ENCODE measurements at regions of chr2 and their contacts with region 1.

Region 1: GRCh38 chr2:132977812-132978529 is 308.0 kb upstream of the LYPD1 start:
- DNase-seq: no peak
- ATAC-seq: peak; percentile 4; the same call in 2 of the 3 replicates
- H3K4me3 ChIP-seq: no peak overlapping the region
- H3K27ac ChIP-seq: no peak overlapping the region
- H3K4me1 ChIP-seq: no peaks in the 10 kb centered on the region
- H3K27me3 ChIP-seq: no peaks in the 10 kb centered on the region
- CTCF ChIP-seq: no peak
- EP300 ChIP-seq: no peak
- POLR2A ChIP-seq: no peak
- RAD21 ChIP-seq: no peak

Region 2: DNA sequence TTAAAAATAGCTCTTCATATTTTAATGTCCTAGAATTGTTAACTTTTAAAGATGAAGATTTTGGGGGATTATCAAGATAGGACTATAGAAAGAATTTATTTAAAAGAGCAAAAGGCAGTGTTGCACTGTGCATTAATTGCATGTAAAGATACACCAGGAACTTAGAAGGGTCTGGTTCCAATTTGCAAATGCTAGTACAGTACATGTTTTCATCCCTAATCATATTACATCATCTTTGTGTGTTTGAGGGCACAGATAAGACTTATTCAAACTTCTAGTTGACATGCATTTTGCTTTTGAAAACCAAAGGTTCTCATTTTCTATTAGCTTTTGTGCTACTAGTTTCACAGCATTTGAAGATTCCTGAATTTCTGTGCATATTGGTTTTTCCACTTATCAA is 76.3 kb before region 1 on chr2:
- CTCF ChIA-PET with region 1: no interaction called
- POLR2A ChIA-PET with region 1: no interaction called
- RAD21 ChIA-PET with region 1: interaction called, 4 read pairs
- SMC1A ChIA-PET with region 1: no interaction called
- in situ Hi-C with region 1: no loop called
- intact Hi-C with region 1: loop called (anchors 2 kb)
- DNase-seq: no peak
- ATAC-seq: 0 out of 3 replicates have a peak, but pooled peaks have one; percentile 17
- H3K4me3 ChIP-seq: no peak overlapping the region
- H3K27ac ChIP-seq: no peak overlapping the region
- H3K4me1 ChIP-seq: no peaks in the 10 kb centered on the region
- H3K27me3 ChIP-seq: no peaks in the 10 kb centered on the region; a peak in 1 of 4 replicates
- CTCF ChIP-seq: no peak
- EP300 ChIP-seq: no peak
- POLR2A ChIP-seq: no peak
- RAD21 ChIP-seq: no peak

Region 3: GRCh38 chr2:132936791-132937190 is 41.2 kb before region 1 on chr2:
- CTCF ChIA-PET with region 1: interaction called, 4 read pairs
- POLR2A ChIA-PET with region 1: interaction called, 10 read pairs
- RAD21 ChIA-PET with region 1: interaction called, 36 read pairs
- SMC1A ChIA-PET with region 1: interaction called, 113 read pairs
- in situ Hi-C with region 1: no loop called
- intact Hi-C with region 1: no loop called
- DNase-seq: peak; percentile 40
- ATAC-seq: peak; percentile 99
- H3K4me3 ChIP-seq: no peak overlapping the region
- H3K27ac ChIP-seq: no peak overlapping the region
- H3K4me1 ChIP-seq: no peaks in the 10 kb centered on the region
- H3K27me3 ChIP-seq: no peaks in the 10 kb centered on the region
- CTCF ChIP-seq: no peak
- EP300 ChIP-seq: peak in 1 of 2 experiments; percentile 73; a peak in 1 of 4 replicates
- POLR2A ChIP-seq: no peak
- RAD21 ChIP-seq: no peak

Region 4: DNA sequence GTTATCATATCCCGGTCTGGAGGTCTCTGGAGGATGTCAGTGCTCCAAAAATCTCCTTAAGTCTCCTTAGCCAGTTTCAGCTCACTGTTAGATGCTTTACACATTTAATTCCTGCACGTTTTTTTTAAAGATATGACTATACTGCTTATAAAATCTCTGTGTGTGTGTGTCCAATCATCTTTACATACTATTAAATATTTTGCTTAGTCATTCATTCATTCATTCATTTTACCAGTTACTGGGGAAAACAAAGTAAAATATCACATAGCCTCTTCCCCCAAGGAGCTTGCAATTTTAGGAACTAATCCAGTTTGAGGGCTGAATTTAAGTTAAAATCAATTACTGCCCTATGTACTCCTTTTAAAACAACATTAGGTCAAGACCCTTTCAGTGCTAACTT is 14.8 kb before region 1 on chr2:
- CTCF ChIA-PET with region 1: interaction called, 9 read pairs
- POLR2A ChIA-PET with region 1: no interaction called
- RAD21 ChIA-PET with region 1: interaction called, 12 read pairs
- SMC1A ChIA-PET with region 1: interaction called, 31 read pairs
- in situ Hi-C with region 1: no loop called
- intact Hi-C with region 1: no loop called
- DNase-seq: no peak
- ATAC-seq: no peak
- H3K4me3 ChIP-seq: no peak overlapping the region
- H3K27ac ChIP-seq: no peak overlapping the region
- H3K4me1 ChIP-seq: no peaks in the 10 kb centered on the region
- H3K27me3 ChIP-seq: no peaks in the 10 kb centered on the region
- CTCF ChIP-seq: no peak
- EP300 ChIP-seq: no peak
- POLR2A ChIP-seq: no peak
- RAD21 ChIP-seq: no peak

Region 5: DNA sequence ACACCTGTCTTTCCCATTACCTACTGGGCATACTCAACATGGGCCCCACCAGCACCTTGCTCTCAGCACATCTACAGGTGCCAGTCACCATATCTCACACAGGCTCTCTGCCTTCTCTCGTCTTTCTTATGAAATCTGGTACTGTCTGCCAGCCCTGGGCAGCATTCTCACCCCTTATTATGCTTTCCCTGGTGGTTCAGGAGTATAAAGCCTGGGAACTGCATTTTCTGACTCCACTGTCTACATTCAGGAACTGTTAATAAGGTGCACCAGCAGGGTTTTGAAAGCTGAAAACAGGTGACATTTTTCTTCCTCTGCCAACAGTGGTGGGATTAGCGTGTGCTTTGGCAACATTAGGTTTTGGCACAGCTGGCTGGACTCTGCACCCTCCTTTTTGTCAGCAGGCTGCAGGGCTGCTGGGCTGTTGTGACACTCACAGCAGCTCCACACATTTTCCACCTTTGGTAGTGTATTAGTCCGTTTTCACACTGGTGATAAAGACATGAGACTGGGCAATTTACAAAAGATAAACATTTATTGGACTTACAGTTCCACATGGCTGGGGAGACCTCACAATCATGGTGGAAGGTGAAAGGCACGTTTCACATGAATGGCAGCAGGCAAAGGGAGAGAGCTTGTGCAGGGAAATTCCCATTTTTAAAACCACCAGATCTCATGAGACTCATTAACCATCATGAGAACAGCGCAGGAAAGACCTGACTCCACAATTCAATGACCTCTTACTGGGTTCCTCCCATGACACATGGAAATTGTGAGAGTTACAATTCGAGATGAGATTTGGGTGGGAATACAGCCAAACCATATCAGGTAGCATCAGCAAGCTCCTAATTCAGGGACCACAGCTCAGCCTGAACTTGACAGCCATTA is 35.1 kb after region 1 on chr2:
- CTCF ChIA-PET with region 1: interaction called, 5 read pairs
- POLR2A ChIA-PET with region 1: interaction called, 4 read pairs
- RAD21 ChIA-PET with region 1: interaction called, 9 read pairs
- SMC1A ChIA-PET with region 1: interaction called, 15 read pairs
- in situ Hi-C with region 1: no loop called
- intact Hi-C with region 1: no loop called
- DNase-seq: peak; percentile 15
- ATAC-seq: peak; percentile 76
- H3K4me3 ChIP-seq: no peak overlapping the region
- H3K27ac ChIP-seq: no peak overlapping the region
- H3K4me1 ChIP-seq: no peaks in the 10 kb centered on the region
- H3K27me3 ChIP-seq: no peaks in the 10 kb centered on the region
- CTCF ChIP-seq: no peak
- EP300 ChIP-seq: no peak
- POLR2A ChIP-seq: no peak
- RAD21 ChIP-seq: no peak